ENCODE measurements at regions of chr10 and their contacts with region 1.

Region 1: GRCh38 chr10:70221030-70221429 is 12.2 kb downstream of the PPA1 start:
- DNase-seq: no peak
- ATAC-seq: no peak
- H3K4me3 ChIP-seq: no peak overlapping the region
- H3K27ac ChIP-seq: peak overlapping the region; percentile 67; the same call in 1 of the 2 replicates
- H3K4me1 ChIP-seq: peaks cover 24 to 36% of the 10 kb centered on the region in 2 experiments
- H3K27me3 ChIP-seq: no peaks in the 10 kb centered on the region
- CTCF ChIP-seq: no peak
- POLR2A ChIP-seq: no peak
- RAD21 ChIP-seq: no peak

Region 2: DNA sequence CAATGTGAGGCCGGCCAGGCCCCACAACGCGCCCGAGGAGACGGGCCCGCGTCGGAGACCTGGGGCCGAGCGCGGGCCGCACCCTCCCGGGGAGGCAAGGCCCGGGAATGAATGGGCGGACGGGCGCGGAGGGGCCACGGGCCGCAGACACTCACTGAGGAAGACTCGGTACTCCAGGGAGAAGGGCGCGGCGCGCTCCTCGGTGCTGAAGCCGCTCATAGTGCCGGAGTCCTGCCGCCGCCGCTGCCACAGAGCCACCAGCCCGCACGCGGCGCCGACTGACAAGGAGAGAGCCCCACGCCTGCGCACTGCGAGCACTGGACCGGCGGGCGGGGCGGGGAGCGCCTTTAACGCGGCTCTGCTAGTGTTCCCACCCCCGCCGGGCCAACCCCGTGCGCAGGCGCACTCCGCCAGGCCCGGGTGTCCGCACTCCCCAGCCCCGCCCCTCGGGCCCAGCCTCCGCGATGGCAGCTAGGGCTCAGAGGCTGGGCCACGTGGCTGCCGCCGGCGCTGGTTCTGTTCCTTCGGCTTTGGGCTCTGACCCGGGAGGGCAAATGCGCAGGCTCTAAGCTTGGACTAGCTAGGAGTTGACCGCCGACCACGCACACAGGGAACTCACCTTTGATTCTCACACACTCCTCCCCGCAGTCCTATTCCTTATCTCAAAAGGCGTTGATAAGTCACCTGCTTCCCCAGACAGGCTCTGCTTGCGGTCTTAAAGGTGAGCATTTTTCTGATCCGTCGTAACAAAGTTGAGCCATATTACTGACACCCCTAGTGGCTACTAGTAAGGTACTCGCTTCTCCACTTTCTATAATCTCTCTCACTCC is 12.3 kb after region 1 on chr10 and contains the start of gene PPA1:
- CTCF ChIA-PET with region 1: interaction called, 16 read pairs
- POLR2A ChIA-PET with region 1: interaction called, 19 read pairs
- RAD21 ChIA-PET with region 1: no interaction called
- intact Hi-C with region 1: no loop called
- DNase-seq: peak; percentile 90
- ATAC-seq: peak; percentile 92
- H3K4me3 ChIP-seq: peak within 1 kb of the TSS; percentile 89 to 95
- H3K27ac ChIP-seq: peak within 1 kb of the TSS; percentile 80
- H3K4me1 ChIP-seq: peaks cover 0 to 19% of the 10 kb centered on the region in 2 experiments; a peak in 3 of 4 replicates
- H3K27me3 ChIP-seq: no peaks in the 10 kb centered on the region
- CTCF ChIP-seq: peak in 1 of 3 experiments; percentile 39; a peak in 3 of 6 replicates
- POLR2A ChIP-seq: peak; percentile 87
- RAD21 ChIP-seq: no peak
- total RNA-seq, gene PPA1: 234 TPM

Region 3: DNA sequence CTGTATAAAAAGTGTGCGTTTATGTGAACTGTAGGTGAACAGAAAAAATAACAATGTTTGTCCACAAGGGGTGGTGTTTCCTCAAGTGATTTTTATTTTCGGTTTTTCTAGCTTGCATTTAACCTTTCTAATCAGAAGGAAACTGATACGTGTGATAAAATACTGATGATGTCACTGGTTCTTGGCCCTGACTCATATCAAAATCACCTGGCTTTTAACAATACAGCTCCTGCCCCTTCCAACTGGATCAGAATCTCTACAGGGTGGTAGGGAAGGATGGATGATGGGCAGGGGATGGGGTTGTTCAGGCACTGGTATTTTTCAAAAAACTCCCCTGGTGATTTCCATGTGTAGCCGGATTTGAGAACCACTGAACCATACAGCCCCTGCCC is 51.9 kb after region 1 on chr10:
- CTCF ChIA-PET with region 1: interaction called, 13 read pairs
- POLR2A ChIA-PET with region 1: no interaction called
- RAD21 ChIA-PET with region 1: interaction called in 1 of 2 experiments, 3 read pairs
- intact Hi-C with region 1: no loop called
- DNase-seq: no peak
- ATAC-seq: peak; percentile 79
- H3K4me3 ChIP-seq: no peak overlapping the region
- H3K27ac ChIP-seq: no peak overlapping the region
- H3K4me1 ChIP-seq: peaks cover 0 to 16% of the 10 kb centered on the region in 2 experiments; a peak in 3 of 4 replicates
- H3K27me3 ChIP-seq: no peaks in the 10 kb centered on the region
- CTCF ChIP-seq: peak; percentile 34 to 73 (median 38); a peak in 5 of 6 replicates
- POLR2A ChIP-seq: no peak
- RAD21 ChIP-seq: peak; percentile 59

Region 4: GRCh38 chr10:70348228-70348850 is 127.3 kb after region 1 on chr10:
- CTCF ChIA-PET with region 1: interaction called, 18 read pairs
- POLR2A ChIA-PET with region 1: no interaction called
- RAD21 ChIA-PET with region 1: no interaction called
- intact Hi-C with region 1: loop called (anchors 1 kb)
- DNase-seq: no peak
- ATAC-seq: peak; percentile 86
- H3K4me3 ChIP-seq: no peak overlapping the region
- H3K27ac ChIP-seq: no peak overlapping the region
- H3K4me1 ChIP-seq: no peaks in the 10 kb centered on the region
- H3K27me3 ChIP-seq: no peaks in the 10 kb centered on the region
- CTCF ChIP-seq: peak; percentile 65 to 80 (median 78)
- POLR2A ChIP-seq: no peak
- RAD21 ChIP-seq: peak; percentile 79

Region 5: GRCh38 chr10:70381471-70382421 is 160.7 kb after region 1 on chr10:
- CTCF ChIA-PET with region 1: interaction called, 82 read pairs
- POLR2A ChIA-PET with region 1: interaction called, 9 read pairs
- RAD21 ChIA-PET with region 1: interaction called, 5 to 7 read pairs
- intact Hi-C with region 1: no loop called
- DNase-seq: no peak
- ATAC-seq: peak; percentile 37
- H3K4me3 ChIP-seq: peak overlapping the region; percentile 70
- H3K27ac ChIP-seq: peak overlapping the region; percentile 60
- H3K4me1 ChIP-seq: peaks cover 32 to 48% of the 10 kb centered on the region in 2 experiments
- H3K27me3 ChIP-seq: no peaks in the 10 kb centered on the region
- CTCF ChIP-seq: no peak
- POLR2A ChIP-seq: no peak
- RAD21 ChIP-seq: no peak

Region 6: DNA sequence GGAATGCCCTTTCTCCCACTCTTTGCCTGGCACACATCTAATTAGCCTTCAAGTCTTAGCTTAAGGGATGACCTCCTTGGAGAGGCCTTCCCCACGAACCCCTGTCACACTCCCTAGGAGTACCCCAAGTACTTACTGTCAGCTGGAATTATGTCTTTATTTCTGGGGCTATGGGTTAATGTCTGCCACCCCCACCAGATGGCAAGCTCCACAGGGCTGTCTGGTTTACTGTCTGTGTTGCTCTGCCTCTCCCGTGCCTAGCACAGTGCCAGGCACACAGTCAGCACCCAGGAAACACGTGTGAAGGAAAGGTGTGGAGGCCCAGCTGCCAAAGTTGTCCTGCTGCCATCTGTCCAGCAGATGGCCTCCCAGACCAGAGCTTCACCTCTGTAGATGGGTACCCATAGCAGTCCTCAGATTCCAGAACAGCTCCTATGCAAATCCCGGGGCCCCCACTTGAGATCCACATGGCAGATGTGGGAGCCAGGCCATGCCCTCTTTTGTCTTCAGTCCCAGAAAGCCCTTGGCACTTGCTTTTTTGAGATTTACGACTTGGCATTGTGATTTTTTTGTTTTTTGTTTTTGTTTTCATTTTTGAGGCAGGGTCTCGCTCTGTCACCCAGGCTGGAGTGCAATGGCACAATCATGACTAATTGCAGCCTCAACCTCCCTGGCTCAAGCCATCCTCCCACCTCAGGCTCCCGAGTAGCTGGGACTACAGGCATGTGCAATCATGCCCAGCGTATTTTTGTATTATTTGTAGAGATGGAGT is 240.4 kb after region 1 on chr10:
- CTCF ChIA-PET with region 1: interaction called, 10 read pairs
- POLR2A ChIA-PET with region 1: no interaction called
- RAD21 ChIA-PET with region 1: interaction called in 1 of 2 experiments, 7 read pairs
- intact Hi-C with region 1: no loop called
- DNase-seq: peak; percentile 67
- ATAC-seq: peak; percentile 78
- H3K4me3 ChIP-seq: no peak overlapping the region
- H3K27ac ChIP-seq: no peak overlapping the region
- H3K4me1 ChIP-seq: peaks cover 31 to 54% of the 10 kb centered on the region in 2 experiments
- H3K27me3 ChIP-seq: no peaks in the 10 kb centered on the region
- CTCF ChIP-seq: peak; percentile 86 to 92 (median 88)
- POLR2A ChIP-seq: no peak
- RAD21 ChIP-seq: peak; percentile 99

Measured in HCT116 (cell line).